Mammary epithelial cell (primary cell): ENCODE measurements at regions of chr18 and their contacts with region 1.

Region 1: GRCh38 chr18:4106407-4107033 is 348.6 kb downstream of the DLGAP1 start:
- DNase-seq: peak; percentile 35
- H3K4me3 ChIP-seq: no peak overlapping the region
- H3K27ac ChIP-seq: no peak overlapping the region
- H3K4me1 ChIP-seq: no peaks in the 10 kb centered on the region
- H3K27me3 ChIP-seq: no peaks in the 10 kb centered on the region
- CTCF ChIP-seq: peak; percentile 76 to 77

Region 2: GRCh38 chr18:4172196-4173100 is 65.9 kb after region 1 on chr18:
- CTCF ChIA-PET with region 1: no interaction called
- dilution Hi-C with region 1: no loop called
- in situ Hi-C with region 1: no loop called
- intact Hi-C with region 1: no loop called
- DNase-seq: no peak
- H3K4me3 ChIP-seq: no peak overlapping the region
- H3K27ac ChIP-seq: no peak overlapping the region
- H3K4me1 ChIP-seq: no peaks in the 10 kb centered on the region
- H3K27me3 ChIP-seq: no peaks in the 10 kb centered on the region
- CTCF ChIP-seq: no peak

Region 3: GRCh38 chr18:4789506-4789905 is 683.0 kb after region 1 on chr18:
- CTCF ChIA-PET with region 1: no interaction called
- dilution Hi-C with region 1: no loop called
- in situ Hi-C with region 1: no loop called
- intact Hi-C with region 1: loop called (anchors 2 kb)
- DNase-seq: no peak
- H3K4me3 ChIP-seq: no peak overlapping the region
- H3K27ac ChIP-seq: no peak overlapping the region
- H3K4me1 ChIP-seq: no peaks in the 10 kb centered on the region
- H3K27me3 ChIP-seq: no peaks in the 10 kb centered on the region
- CTCF ChIP-seq: no peak

Region 4: DNA sequence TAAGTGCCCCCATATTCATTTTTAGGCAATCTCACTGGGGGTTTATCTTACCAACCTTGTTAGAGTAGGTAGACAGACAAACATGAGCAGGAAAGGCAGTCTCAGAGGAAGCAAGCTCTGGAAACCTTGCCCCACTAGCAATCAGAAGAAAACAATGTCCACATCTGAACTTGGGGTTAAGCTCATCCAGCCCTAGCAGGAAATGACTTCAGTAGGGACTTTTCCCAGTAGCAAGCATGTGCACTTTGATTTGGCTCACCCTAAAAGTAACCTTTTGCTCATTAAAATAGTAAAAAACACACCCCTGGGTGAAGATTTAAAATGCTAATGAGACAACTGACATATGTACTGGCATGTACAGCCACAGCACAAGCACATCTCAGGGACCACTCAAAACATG is 915.0 kb after region 1 on chr18:
- CTCF ChIA-PET with region 1: no interaction called
- dilution Hi-C with region 1: no loop called
- in situ Hi-C with region 1: no loop called
- intact Hi-C with region 1: loop called (anchors 1 kb)
- DNase-seq: no peak
- H3K4me3 ChIP-seq: no peak overlapping the region
- H3K27ac ChIP-seq: no peak overlapping the region
- H3K4me1 ChIP-seq: no peaks in the 10 kb centered on the region
- H3K27me3 ChIP-seq: no peaks in the 10 kb centered on the region
- CTCF ChIP-seq: no peak

Region 5: GRCh38 chr18:5057386-5058348 is 951.1 kb after region 1 on chr18:
- CTCF ChIA-PET with region 1: interaction called, 3 read pairs
- dilution Hi-C with region 1: no loop called
- in situ Hi-C with region 1: loop called (anchors 10 to 25 kb)
- intact Hi-C with region 1: loop called (anchors 1 kb)
- DNase-seq: peak; percentile 15
- H3K4me3 ChIP-seq: no peak overlapping the region
- H3K27ac ChIP-seq: no peak overlapping the region
- H3K4me1 ChIP-seq: no peaks in the 10 kb centered on the region
- H3K27me3 ChIP-seq: no peaks in the 10 kb centered on the region
- CTCF ChIP-seq: peak; percentile 46 to 69